ENCODE measurements at regions of chr1 and their contacts with region 1.

Region 1: DNA sequence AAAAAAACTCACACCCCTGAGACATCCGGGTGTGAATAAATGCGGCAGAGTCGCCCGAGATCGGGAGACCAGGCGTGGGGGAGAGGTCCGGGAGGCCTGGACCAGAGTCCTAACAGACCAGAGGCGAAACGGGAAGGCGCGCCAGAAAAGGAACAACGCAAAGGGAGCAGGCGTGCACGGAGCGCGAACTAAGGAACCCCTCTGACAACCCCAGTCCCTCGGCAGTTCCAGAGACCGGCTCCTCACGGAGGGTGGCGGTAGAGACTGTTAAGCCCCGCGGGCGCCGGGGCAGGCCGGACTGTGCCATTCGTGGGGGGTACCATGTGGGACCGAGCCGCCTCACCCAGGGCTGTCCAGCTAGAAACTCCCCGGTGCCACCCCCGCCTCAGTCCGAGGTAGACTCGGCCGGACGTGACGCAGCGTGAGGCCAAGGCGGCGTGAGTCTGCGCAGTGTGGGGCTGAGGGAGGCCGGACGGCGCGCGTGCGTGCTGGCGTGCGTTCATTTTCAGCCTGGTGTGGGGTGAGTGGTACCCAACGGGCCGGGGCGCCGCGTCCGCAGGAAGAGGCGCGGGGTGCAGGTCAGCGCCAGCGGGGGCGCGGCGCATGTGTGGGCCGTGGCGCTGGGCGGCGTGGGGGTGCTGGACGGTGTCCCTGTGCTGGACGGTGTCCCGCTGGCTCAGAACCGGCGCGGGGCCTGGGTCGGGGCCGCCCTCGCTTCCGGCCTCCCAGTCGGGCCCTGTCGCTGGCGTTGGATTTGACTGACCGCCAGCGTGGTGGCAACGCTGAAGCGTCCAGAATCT is at the start of gene PARK7:
- DNase-seq: peak; percentile 100
- ATAC-seq: peak; percentile 96
- H3K4me3 Mint-ChIP-seq: peak within 1 kb of the TSS; percentile 98
- H3K27ac Mint-ChIP-seq: peak within 1 kb of the TSS; percentile 99
- H3K4me1 Mint-ChIP-seq: peaks cover 60% of the 10 kb centered on the region
- H3K27me3 Mint-ChIP-seq: no peaks in the 10 kb centered on the region
- CTCF ChIP-seq: peak; percentile 22
- total RNA-seq, gene PARK7: 539 to 552 TPM

Region 2: GRCh38 chr1:7893529-7894180 is 67.8 kb before region 1 on chr1:
- CTCF ChIA-PET with region 1: no interaction called
- POLR2A ChIA-PET with region 1: no interaction called
- intact Hi-C with region 1: no loop called
- DNase-seq: no peak
- ATAC-seq: no peak
- H3K4me3 Mint-ChIP-seq: no peak overlapping the region
- H3K27ac Mint-ChIP-seq: no peak overlapping the region
- H3K4me1 Mint-ChIP-seq: peaks cover 3% of the 10 kb centered on the region
- H3K27me3 Mint-ChIP-seq: no peaks in the 10 kb centered on the region
- CTCF ChIP-seq: no peak

Region 3: DNA sequence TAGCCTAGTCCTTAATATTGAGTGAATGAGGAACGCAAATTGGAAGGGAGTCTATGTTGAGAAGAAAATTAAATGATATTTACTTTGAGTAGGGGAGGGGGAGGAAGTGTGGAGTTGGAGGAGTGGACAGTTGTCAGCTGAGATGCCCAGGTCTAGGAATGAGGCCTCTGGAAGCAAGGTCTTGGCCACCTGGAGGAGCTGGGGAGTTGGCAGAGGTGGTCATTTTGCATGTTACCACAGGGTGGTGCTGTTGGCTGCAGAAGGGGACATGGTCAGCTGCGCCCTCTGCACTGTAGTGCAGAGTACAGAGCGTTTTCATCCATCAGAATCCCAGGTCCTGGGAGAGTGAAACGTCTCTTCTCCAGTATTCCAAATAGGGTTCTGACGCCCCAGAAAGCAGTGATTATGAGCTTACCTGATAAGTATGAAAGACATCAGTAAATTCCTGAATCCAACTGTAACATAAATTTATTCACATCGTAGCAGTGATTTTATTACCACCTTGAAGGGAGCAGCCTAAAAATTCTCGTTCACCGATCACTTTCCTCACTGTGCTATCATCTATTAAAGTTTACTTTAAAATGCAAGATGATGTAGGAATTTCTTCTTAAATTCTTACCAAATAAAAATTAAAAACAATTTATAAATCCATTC is 13.9 kb after region 1 on chr1:
- CTCF ChIA-PET with region 1: interaction called, 17 read pairs
- POLR2A ChIA-PET with region 1: interaction called, 4 read pairs
- intact Hi-C with region 1: no loop called
- DNase-seq: peak; percentile 59
- ATAC-seq: peak; percentile 95
- H3K4me3 Mint-ChIP-seq: no peak overlapping the region
- H3K27ac Mint-ChIP-seq: peak overlapping the region; percentile 35
- H3K4me1 Mint-ChIP-seq: peaks cover 16% of the 10 kb centered on the region
- H3K27me3 Mint-ChIP-seq: no peaks in the 10 kb centered on the region
- CTCF ChIP-seq: peak; percentile 77

Measured in activated CD8-positive, alpha-beta T cell treated with anti-CD3 and anti-CD28 coated beads for 36 hours (primary cell).